AG04449 (cell line): ENCODE measurements at regions of chr7 and their contacts with region 1.

Region 1: GRCh38 chr7:47266131-47266706 is 315.7 kb downstream of the TNS3 start:
- DNase-seq: no peak
- H3K4me3 ChIP-seq: no peak overlapping the region
- CTCF ChIP-seq: peak; percentile 82

Region 2: GRCh38 chr7:46900312-46901263 is 365.6 kb before region 1 on chr7:
- CTCF ChIA-PET with region 1: no interaction called
- POLR2A ChIA-PET with region 1: no interaction called
- DNase-seq: no peak
- H3K4me3 ChIP-seq: no peak overlapping the region
- CTCF ChIP-seq: no peak

Region 3: GRCh38 chr7:47045207-47046051 is 220.8 kb before region 1 on chr7:
- CTCF ChIA-PET with region 1: no interaction called
- POLR2A ChIA-PET with region 1: no interaction called
- DNase-seq: no peak
- H3K4me3 ChIP-seq: no peak overlapping the region
- CTCF ChIP-seq: no peak

Region 4: DNA sequence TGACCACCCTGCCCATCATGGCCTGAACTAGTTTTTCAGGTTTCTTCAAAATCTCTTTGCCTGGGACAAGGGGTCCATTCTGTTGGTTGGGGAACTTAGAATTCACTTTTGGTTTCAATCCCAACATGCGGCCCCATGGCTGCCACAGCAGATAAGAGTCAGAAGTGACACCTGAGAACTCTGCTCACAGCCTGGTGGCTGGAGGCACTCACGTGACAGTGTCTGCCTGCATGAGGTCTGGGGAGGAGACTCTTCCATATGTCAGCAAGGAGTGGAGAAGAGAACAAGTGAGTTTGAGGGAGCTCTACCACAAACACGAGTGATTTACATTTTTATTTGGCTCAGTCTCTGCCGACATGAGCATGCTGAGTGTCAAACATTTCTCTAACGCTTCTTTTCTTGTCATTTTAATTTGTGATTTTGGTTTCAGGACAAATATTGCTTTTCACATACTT is 54.7 kb before region 1 on chr7:
- CTCF ChIA-PET with region 1: no interaction called
- POLR2A ChIA-PET with region 1: no interaction called
- DNase-seq: no peak
- H3K4me3 ChIP-seq: no peak overlapping the region
- CTCF ChIP-seq: no peak

Region 5: GRCh38 chr7:47254081-47255006 is 11.9 kb before region 1 on chr7:
- CTCF ChIA-PET with region 1: interaction called, 119 read pairs
- POLR2A ChIA-PET with region 1: no interaction called
- DNase-seq: no peak
- H3K4me3 ChIP-seq: peak overlapping the region; percentile 66
- CTCF ChIP-seq: peak; percentile 75

Region 6: GRCh38 chr7:47301105-47301477 is 34.9 kb after region 1 on chr7:
- CTCF ChIA-PET with region 1: interaction called, 10 read pairs
- POLR2A ChIA-PET with region 1: no interaction called
- DNase-seq: no peak
- H3K4me3 ChIP-seq: no peak overlapping the region
- CTCF ChIP-seq: no peak

Region 7: DNA sequence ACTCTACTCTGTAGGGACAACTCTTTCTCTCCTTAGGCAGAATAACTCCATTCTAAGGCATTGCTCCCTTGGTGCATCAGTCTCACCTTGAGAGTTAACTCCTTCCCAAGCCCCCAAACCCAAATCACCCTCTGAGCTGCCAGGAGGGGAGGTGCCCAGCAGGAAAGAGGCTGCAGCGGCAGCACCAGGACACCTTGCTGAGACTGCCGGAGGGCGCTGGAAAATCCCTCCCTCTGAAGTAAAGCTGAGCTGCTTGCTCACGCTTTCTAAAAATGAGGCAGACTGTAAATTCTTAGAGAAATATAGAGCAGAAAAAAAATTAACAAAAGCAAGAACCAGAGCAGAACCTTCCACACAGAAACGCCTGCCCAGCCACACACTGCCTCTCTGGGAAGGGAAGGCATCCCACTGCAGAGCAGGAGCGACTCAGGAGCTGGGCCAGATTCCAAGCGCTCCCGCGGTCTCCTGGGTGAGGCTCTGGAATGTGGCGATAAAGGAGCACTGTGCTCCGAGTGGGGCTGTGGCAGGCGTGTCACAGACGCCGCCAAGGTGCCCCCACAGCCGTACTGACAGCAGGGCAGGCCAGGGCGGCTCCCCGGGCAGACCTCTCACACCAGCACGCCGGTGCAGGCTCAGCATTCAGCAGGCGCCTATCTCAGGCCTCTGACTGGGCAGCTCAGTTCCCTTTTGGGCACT is 113.6 kb after region 1 on chr7:
- CTCF ChIA-PET with region 1: interaction called, 31 read pairs
- POLR2A ChIA-PET with region 1: no interaction called
- DNase-seq: no peak
- H3K4me3 ChIP-seq: no peak overlapping the region
- CTCF ChIP-seq: no peak

Region 8: DNA sequence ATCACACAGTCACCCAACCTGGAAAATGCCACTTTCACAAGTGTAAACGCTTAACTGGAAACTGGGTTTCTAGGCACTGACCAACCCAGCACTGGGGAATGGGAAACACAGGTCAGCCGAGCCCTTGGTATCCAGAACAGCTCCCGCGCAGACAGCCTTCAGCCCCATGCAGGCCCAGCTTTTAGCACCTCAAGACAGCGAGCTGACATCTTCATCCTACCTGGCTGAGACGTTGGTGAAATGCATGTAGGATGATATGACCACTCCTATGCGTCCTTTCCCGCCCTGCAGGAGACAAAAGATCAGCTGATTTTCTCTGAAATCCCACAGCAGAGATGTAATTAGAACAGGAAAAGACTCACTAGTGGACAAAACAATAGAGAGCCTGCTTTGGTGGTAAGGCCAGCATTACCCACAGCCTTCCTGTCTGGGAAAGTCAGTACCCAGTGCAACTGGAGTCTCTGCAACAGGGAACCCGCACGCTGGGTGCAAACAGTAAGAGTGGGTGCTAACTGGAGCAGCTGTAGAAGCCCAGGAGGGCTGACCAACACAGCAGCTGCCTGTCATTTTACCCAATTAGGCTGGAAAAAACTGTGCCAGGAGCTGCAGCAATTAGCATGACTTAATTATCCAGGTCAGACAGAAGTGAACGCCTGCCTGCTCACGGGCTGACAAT is 162.0 kb after region 1 on chr7:
- CTCF ChIA-PET with region 1: interaction called, 78 read pairs
- POLR2A ChIA-PET with region 1: no interaction called
- DNase-seq: no peak
- H3K4me3 ChIP-seq: no peak overlapping the region
- CTCF ChIP-seq: no peak

Region 9: GRCh38 chr7:47461201-47461600 is 195.0 kb after region 1 on chr7:
- CTCF ChIA-PET with region 1: interaction called, 10 read pairs
- POLR2A ChIA-PET with region 1: no interaction called
- DNase-seq: peak; percentile 28
- H3K4me3 ChIP-seq: no peak overlapping the region
- CTCF ChIP-seq: no peak

Region 10: DNA sequence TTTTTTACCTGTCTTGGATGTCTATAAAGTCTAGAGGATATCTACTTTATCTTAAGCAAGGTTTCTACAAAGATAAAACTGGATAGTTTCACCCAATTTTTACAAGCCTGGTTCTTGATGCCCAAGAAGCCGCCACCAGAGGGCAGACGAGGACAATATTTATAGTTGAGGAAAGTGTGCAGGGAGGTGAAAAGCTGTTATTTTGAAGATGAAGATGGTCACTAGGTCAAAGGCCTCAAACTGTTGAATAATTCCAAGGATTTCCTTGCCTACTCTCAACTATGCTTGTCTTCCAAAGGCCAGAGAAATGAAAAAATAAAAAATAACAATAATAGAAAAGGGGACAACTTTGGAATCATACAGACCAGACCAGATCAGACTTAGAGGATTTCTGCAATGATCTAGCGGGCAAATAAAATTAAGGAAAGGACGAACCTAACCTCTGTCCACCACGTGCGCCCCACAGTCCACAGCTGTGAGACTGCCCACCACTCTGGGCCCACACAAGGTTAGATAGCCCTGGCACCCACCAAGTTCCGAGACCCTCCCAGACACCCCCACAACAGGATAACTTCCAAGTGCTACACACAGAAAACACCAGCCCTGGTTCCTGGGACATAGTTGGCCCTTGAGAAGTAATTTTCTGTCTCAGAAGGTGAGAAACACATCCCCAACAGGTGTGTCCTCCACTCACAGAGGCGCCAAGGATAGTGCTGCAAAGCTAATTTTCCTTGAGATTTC is 679.2 kb after region 1 on chr7:
- CTCF ChIA-PET with region 1: interaction called, 35 read pairs
- POLR2A ChIA-PET with region 1: no interaction called
- DNase-seq: no peak
- H3K4me3 ChIP-seq: no peak overlapping the region
- CTCF ChIP-seq: peak; percentile 49